ENCODE measurements at regions of chr7 and their contacts with region 1.

Region 1: GRCh38 chr7:73851410-73852234 is 9.3 kb upstream of the METTL27 start:
- DNase-seq: peak; percentile 51
- H3K4me3 Mint-ChIP-seq: no peak overlapping the region
- H3K27ac Mint-ChIP-seq: peak overlapping the region; percentile 95
- H3K4me1 Mint-ChIP-seq: peaks cover 30% of the 10 kb centered on the region
- H3K27me3 Mint-ChIP-seq: no peaks in the 10 kb centered on the region
- CTCF ChIP-seq: no peak

Region 2: DNA sequence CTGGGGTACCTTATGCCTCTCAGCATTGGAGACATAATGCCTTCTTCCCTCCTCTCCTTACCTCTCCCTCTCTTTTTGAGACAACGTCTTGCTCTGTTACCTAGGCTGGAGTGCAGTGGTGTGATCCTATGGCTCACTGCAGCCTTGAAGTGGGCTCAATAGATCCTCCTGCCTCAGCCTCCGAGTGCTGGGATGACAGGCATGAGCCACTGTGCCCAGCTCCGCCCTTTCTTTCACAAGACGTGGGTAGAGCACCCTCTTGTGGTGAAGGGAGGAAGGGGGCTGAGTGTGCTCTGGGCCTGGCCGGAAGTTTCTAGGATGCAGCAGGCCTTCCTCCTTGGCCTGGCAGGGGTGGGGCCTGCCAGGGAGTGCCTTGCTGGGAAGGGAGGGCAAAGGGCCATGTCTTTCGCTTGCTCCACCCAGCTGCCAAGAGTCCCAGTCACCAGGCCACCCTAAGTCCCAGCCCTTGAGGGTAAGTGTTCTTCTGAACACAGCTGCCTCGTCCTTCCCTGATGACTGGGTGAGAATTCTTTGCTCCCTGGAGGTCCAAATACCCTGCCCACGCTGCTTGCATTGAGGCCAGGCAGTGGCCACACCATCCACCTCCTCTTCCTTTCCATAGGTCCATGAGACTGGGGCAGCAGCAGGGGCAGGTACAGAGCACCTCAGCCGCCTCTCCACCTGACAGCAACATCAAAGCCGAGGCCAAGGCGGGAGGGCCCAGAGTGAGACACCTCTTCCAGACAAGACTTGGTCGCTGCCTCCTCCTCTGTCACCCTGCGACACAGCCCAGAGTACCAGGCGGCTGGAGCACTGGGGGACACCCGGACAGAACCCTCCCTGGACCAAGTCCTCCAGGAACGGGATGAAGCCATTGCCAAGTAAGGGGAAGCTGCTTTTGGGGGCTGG is 116.7 kb before region 1 on chr7:
- CTCF ChIA-PET with region 1: interaction called, 6 read pairs
- intact Hi-C with region 1: loop called (anchors 1 kb)
- DNase-seq: peak; percentile 89
- H3K4me3 Mint-ChIP-seq: peak overlapping the region; percentile 28
- H3K27ac Mint-ChIP-seq: peak overlapping the region; percentile 17
- H3K4me1 Mint-ChIP-seq: peaks cover 19% of the 10 kb centered on the region
- H3K27me3 Mint-ChIP-seq: no peaks in the 10 kb centered on the region
- CTCF ChIP-seq: peak; percentile 83

Region 3: GRCh38 chr7:73742693-73743595 is 108.7 kb before region 1 on chr7:
- CTCF ChIA-PET with region 1: interaction called, 5 read pairs
- intact Hi-C with region 1: loop called (anchors 2 kb)
- DNase-seq: peak; percentile 97
- H3K4me3 Mint-ChIP-seq: peak overlapping the region; percentile 56
- H3K27ac Mint-ChIP-seq: peak overlapping the region; percentile 98
- H3K4me1 Mint-ChIP-seq: peaks cover 29% of the 10 kb centered on the region
- H3K27me3 Mint-ChIP-seq: no peaks in the 10 kb centered on the region
- CTCF ChIP-seq: no peak

Region 4: GRCh38 chr7:73769992-73770859 is 81.4 kb before region 1 on chr7 and contains the start of gene CLDN3:
- CTCF ChIA-PET with region 1: interaction called, 3 read pairs
- intact Hi-C with region 1: loop called (anchors 2 kb)
- DNase-seq: peak; percentile 95
- H3K4me3 Mint-ChIP-seq: peak within 1 kb of the TSS; percentile 88
- H3K27ac Mint-ChIP-seq: peak within 1 kb of the TSS; percentile 69
- H3K4me1 Mint-ChIP-seq: peaks cover 17% of the 10 kb centered on the region
- H3K27me3 Mint-ChIP-seq: no peaks in the 10 kb centered on the region
- CTCF ChIP-seq: no peak
- total RNA-seq, gene CLDN3: 122 and 135 TPM in 2 replicates

Region 5: DNA sequence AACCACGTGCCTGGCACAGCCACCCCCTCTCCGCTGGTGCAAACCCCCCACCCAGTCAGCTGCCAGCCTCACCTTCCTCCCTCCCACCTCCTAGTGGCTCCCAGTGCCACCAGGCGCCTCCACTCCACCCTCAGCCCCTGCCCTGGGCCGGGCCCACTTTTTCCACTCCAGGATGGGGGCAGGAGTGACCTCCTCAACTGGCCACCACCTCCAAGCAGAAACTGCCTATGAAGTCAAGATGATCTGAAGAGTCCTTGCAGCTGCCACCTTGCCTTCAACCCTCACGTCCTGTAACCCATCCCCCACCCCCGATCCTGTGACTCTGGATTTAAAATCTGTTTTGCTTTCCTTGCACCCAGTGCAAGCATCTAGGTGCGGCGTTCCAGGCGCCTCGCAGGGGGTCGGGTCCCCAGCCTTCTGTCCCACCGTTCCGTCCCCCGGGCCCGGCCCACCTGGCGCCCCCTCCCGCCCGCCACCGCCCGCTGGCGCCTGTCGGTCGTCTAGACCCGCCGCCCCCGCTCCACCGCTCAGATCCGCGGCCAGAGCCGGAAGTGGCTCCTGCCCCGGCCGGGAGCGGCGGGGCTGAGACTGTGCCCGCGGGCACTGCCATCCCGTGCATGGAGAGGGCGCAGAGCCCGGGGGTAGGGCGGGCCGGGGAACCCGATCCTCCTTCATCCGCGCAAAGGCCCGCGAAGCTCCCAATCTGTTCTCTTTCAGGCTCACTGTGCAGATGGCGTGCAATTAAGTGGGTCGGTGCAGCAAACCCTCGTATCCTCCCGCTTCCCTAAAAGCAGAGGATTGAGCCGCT is 754.7 kb after region 1 on chr7:
- CTCF ChIA-PET with region 1: no interaction called
- intact Hi-C with region 1: no loop called
- DNase-seq: peak; percentile 42
- H3K4me3 Mint-ChIP-seq: peak overlapping the region; percentile 50
- H3K27ac Mint-ChIP-seq: no peak overlapping the region
- H3K4me1 Mint-ChIP-seq: peaks cover 25% of the 10 kb centered on the region
- H3K27me3 Mint-ChIP-seq: no peaks in the 10 kb centered on the region
- CTCF ChIP-seq: no peak